ENCODE measurements at regions of chrX and their contacts with region 1.

Region 1: GRCh38 chrX:131617182-131617581 is 73.3 kb downstream of the OR13H1 start:
- DNase-seq: peak in 1 of 2 experiments; percentile 82
- H3K4me3 ChIP-seq: no peak overlapping the region
- H3K27ac ChIP-seq: no peak overlapping the region
- H3K4me1 ChIP-seq: peaks cover 13% of the 10 kb centered on the region; the same call in 1 of the 2 replicates
- H3K27me3 ChIP-seq: no peaks in the 10 kb centered on the region
- CTCF ChIP-seq: no peak

Region 2: GRCh38 chrX:131308980-131309379 is 308.2 kb before region 1 on chrX:
- CTCF ChIA-PET with region 1: no interaction called
- POLR2A ChIA-PET with region 1: no interaction called
- intact Hi-C with region 1: no loop called
- DNase-seq: no peak
- H3K4me3 ChIP-seq: no peak overlapping the region
- H3K27ac ChIP-seq: no peak overlapping the region
- H3K4me1 ChIP-seq: no peaks in the 10 kb centered on the region
- H3K27me3 ChIP-seq: no peaks in the 10 kb centered on the region
- CTCF ChIP-seq: no peak

Region 3: DNA sequence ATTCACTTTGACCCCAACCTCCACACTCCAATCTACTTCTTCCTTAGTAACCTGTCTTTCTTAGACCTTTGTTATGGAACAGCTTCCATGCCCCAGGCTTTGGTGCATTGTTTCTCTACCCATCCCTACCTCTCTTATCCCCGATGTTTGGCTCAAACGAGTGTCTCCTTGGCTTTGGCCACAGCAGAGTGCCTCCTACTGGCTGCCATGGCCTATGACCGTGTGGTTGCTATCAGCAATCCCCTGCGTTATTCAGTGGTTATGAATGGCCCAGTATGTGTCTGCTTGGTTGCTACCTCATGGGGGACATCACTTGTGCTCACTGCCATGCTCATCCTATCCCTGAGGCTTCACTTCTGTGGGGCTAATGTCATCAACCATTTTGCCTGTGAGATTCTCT is 73.0 kb before region 1 on chrX:
- CTCF ChIA-PET with region 1: no interaction called
- POLR2A ChIA-PET with region 1: no interaction called
- intact Hi-C with region 1: loop called (anchors 10 kb)
- DNase-seq: no peak
- H3K4me3 ChIP-seq: no peak overlapping the region
- H3K27ac ChIP-seq: no peak overlapping the region
- H3K4me1 ChIP-seq: no peaks in the 10 kb centered on the region
- H3K27me3 ChIP-seq: no peaks in the 10 kb centered on the region
- CTCF ChIP-seq: no peak

Measured in PC-9 (cell line).